ENCODE measurements at regions of chr11 and their contacts with region 1.

Region 1: DNA sequence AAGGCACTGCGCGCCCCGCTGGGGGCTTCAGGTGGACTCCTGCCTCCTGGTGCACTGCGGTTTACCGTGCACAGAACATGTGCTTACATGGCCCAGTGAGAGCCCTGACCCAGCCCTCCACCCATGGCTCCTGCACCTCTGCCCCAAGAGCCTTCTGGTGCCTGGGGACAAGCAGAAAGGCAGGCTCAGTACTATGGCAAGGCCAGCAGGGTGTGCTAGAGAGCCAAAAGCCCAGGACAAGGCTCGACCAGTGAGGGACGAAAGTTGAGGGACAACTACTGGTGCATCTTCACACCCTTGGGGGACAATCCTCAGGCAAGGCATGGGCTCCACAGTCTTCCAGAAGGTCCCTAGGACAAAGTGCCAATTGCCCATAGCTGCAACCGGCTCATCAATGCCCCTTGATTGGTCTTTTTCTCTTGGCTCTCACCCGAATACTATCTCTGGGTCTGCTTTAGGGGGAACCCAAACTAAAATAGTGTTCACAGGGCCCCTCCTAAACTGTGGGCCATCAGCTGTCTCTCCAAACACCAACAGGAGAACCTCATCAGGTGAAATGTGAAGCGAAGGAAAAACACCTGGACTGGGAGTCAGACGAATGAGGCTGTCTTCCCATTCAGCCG is 13.5 kb downstream of the PGA5 start:
- DNase-seq: peak; percentile 53
- H3K4me3 Mint-ChIP-seq: no peak overlapping the region
- H3K27ac Mint-ChIP-seq: no peak overlapping the region
- H3K4me1 Mint-ChIP-seq: no peaks in the 10 kb centered on the region
- H3K27me3 Mint-ChIP-seq: no peaks in the 10 kb centered on the region

Region 2: DNA sequence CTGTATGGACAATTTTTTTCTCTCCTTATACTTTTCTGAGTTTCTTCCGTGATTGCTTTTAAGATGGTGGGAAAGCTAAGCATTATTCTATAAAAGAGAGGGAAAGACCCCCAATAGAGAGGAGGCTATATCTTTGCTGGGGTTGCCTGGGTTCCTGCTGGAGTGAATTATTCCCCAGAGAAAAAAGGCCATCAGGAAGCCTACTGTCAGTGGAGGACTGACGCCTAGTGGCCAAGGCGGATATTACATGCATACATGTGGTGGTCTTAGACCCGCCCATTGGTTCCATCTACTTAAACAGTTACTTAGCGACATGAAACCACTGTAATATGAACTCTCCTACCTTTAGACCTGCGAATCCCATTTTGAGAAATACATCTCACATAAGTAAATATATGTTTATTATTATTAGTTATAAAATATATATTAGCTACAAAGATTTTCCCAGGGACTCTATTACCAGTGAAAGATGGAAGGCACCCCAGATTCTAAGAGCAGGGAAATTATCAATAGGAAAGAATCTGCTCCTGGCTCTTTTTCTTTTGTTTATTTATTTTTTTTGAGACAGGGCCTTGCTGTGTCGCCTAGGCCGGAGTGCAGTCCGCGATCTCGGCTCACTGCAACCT is 66.9 kb before region 1 on chr11:
- intact Hi-C with region 1: no loop called
- DNase-seq: peak; percentile 62
- H3K4me3 Mint-ChIP-seq: no peak overlapping the region
- H3K27ac Mint-ChIP-seq: no peak overlapping the region
- H3K4me1 Mint-ChIP-seq: peaks cover 5% of the 10 kb centered on the region
- H3K27me3 Mint-ChIP-seq: peaks cover 16% of the 10 kb centered on the region

Region 3: DNA sequence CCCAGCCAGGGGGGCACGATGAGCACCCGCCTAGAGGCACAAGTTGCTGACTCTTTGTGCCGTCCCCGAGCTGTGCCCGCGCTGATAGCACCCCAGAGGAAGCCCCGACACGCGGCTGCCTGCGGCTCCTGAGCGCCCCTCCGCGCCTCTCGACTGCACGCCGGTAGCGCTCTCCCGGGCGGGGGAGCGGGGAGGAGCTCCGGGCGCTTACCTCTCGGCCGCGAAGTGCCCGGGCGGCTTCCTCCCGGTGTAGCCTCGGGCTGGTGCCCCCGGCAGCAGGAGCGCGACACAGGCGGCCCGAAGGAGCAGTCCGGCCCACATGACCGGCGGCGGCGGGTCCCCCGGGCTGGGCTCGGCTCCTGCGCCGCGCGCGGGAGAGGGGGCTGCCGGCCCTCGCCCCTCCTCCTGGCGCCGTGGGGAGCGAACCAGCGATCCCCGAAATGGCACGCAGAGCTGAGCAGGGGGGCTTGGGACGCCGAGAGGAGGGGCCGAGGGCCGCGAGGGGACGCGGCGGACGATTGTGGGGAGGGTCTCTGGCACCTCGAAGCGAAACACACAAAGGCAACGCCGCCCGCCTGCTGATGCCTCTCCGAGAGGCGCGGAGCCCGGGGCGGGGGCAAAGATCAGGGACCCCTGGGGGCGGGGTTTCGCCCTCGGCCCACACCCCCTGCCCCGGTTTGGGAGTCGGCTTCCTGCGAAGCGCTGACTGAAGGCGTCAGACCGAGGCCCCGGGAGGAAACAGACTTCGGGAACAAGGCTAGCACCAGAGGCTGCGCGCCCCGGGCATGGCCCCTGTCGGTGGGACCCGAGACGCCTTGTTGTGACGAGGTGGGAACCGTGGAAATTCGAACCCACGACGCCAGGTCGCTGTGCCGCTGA is 40.4 kb after region 1 on chr11 and contains the start of gene VWCE:
- intact Hi-C with region 1: loop called (anchors 1 kb)
- DNase-seq: peak; percentile 67
- H3K4me3 Mint-ChIP-seq: peak within 1 kb of the TSS; percentile 83
- H3K27ac Mint-ChIP-seq: peak within 1 kb of the TSS; percentile 52
- H3K4me1 Mint-ChIP-seq: peaks cover 30% of the 10 kb centered on the region
- H3K27me3 Mint-ChIP-seq: peaks cover 14% of the 10 kb centered on the region
- total RNA-seq, gene VWCE: 8.1 and 10.1 TPM in 2 replicates

Region 4: DNA sequence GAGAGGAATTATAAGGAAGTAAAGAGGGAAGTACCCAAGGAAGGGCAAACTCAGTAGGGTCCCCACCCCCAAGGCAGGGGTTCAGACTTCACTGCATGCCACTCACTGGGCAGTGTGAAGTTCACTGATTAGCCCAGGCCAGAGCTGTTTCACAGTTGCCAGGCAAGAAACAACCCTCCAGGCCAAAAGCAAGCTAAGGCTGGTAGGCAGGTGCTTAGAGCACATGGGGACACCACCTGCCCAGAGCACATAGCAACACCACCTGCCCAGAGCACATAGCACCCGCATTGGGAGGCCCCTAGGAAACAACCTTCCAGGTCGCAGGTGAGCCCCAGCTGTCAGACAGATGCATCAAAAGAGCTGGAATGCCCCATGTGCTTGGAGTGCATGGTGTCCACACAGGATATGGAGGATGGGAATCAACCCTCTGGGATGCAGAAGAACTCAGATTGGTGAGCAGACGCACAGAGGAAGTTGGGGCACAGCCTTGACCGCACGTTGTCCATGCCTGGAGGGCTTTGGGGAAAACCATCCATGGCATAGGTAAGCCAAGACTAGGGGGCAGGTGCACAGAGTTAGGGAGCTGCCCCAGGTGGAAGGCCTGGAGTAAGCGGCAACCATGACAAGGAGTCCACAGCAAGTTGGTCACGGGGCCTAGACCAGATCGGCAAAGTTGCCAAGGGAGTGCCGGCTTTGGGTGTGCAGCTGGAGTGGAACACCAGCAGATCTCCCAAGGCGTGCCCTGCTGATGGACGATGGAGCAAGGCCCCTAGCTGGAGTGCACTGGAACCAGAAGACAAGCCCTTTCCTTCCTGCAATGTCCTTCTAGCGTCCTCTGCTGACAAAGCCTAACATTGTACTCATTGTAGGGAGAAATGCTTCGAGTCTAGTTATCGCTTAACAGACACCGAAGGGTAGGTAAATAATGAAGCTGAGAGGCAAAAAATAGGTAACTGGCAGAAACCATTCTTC is 130.0 kb after region 1 on chr11:
- intact Hi-C with region 1: loop called (anchors 10 kb)
- DNase-seq: no peak
- H3K4me3 Mint-ChIP-seq: no peak overlapping the region
- H3K27ac Mint-ChIP-seq: no peak overlapping the region
- H3K4me1 Mint-ChIP-seq: peaks cover 6% of the 10 kb centered on the region
- H3K27me3 Mint-ChIP-seq: no peaks in the 10 kb centered on the region

Measured in activated T-helper 2 cell treated with anti-CD3 and anti-CD28 coated beads, Interferon-gamma antibody, Interleukin-2, Interleukin-4, amounts not matched to agents 10 μg/mL and 5 μg/mL and 100 μg/mL, durations not matched to agents 14 hours and 24 hours and 36 hours (primary cell).